ENCODE measurements at regions of chr1 and their contacts with region 1.

Region 1: DNA sequence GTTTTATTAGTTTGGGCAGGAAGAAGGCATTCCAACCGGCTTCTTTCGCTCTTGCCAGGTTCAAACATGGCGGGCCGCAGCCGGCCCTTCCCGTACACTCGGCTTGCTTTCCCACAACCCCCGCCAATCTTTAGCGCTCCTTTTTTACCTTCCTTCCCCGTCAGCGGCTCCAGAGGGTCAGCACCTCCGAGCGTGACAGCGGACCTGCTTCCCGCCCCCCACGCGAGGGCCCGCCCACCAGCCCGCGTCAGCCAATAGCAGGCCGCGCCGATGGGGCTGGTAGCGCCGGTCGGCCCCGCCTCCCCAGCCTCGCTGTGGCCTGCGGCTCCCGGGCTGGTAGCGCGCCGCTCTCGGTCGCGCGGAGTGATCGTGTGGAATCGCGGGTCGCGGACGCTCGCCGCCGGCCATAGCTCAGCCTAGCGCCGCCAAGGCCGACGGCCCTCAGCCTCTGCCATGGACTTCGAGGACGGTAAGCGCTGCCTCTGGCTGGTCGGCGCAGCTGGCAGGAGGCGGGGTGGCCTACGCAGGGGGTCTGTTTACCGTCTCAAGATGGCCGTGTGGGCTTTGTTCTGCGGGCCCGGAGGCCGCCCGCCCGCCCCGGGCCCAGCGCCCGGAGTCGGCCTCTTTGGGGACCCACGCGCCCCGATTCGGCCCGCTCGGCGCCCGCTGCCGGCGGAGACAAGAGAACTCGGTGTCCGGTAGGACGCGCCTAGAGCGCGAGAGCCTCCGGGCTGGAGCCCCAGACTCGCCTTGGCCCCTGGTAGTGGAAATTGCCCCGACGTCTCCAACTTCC is at the start of gene ZNF326:
- DNase-seq: peak; percentile 93
- H3K4me3 Mint-ChIP-seq: peak within 1 kb of the TSS; percentile 99
- H3K27ac Mint-ChIP-seq: peak within 1 kb of the TSS; percentile 97
- H3K4me1 Mint-ChIP-seq: peaks cover 46% of the 10 kb centered on the region
- H3K27me3 Mint-ChIP-seq: no peaks in the 10 kb centered on the region
- total RNA-seq, gene ZNF326: 37.3 and 39.1 TPM in 2 replicates

Region 2: DNA sequence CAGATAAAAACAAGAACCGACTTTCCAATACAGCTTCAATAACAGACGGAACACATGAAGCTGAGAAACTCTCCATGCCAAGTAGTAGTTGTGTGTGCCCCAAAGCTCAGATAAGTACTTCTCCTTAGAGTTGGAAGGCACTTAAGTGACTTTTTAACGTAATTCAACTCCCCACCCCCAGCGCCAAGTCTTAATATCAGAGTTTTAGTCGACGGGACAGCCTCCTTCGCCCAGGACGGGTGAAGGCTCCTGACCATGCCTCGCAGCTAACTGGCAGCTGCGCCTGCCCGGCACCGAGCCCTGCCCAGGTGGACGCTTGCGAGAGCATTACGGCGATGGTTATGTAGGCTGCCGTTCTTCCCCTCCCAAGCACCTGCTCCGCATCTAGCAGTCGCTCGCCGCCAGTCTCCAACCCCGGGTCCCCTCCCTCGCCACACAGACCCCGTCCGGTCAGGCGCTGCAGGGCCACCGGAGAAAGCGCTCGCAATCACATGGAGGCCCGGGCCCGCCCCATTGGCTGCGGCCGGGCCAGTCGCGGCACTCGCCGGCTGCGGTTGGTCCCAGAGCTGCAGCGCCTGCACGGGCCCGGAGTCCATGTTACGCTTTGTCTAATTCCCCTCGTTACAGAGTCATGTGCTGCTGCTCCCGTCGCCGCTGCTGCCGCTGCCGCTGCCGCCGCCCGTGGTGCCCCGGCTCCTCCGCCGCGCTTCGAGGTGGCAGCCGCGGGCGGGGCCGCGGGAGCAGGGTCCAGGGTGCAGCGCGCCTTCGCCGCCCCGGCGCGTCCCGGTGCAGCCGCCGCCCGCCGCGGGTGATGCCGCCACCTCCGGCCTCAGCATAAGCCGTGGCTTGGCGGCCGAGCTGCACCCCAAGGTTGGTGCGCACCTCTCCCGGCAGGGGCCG is 174.3 kb before region 1 on chr1 and contains the start of gene LRRC8D:
- intact Hi-C with region 1: loop called (anchors 1 kb)
- DNase-seq: peak; percentile 72
- H3K4me3 Mint-ChIP-seq: peak within 1 kb of the TSS; percentile 84
- H3K27ac Mint-ChIP-seq: peak within 1 kb of the TSS; percentile 68
- H3K4me1 Mint-ChIP-seq: peaks cover 15% of the 10 kb centered on the region
- H3K27me3 Mint-ChIP-seq: peaks cover 8% of the 10 kb centered on the region
- total RNA-seq, gene LRRC8D: 43.3 and 45.0 TPM in 2 replicates

Region 3: GRCh38 chr1:89974701-89975470 is 20.1 kb before region 1 on chr1:
- intact Hi-C with region 1: no loop called
- DNase-seq: no peak
- H3K4me3 Mint-ChIP-seq: no peak overlapping the region
- H3K27ac Mint-ChIP-seq: no peak overlapping the region
- H3K4me1 Mint-ChIP-seq: peaks cover 24% of the 10 kb centered on the region
- H3K27me3 Mint-ChIP-seq: no peaks in the 10 kb centered on the region

Measured in activated T-helper 1 cell treated with anti-CD3 and anti-CD28 coated beads, Interleukin-12 subunit alpha, Interleukin-12 subunit beta, Interleukin-2, Interleukin-4 antibody, amounts not matched to agents 30 ng/mL and 10 ng/mL and 1 ng/mL, durations not matched to agents 14 hours and 24 hours and 36 hours (primary cell).